Gastrocnemius medialis (tissue), 4 donors: ENCODE measurements at regions of chr1 and their contacts with region 1.

Region 1: DNA sequence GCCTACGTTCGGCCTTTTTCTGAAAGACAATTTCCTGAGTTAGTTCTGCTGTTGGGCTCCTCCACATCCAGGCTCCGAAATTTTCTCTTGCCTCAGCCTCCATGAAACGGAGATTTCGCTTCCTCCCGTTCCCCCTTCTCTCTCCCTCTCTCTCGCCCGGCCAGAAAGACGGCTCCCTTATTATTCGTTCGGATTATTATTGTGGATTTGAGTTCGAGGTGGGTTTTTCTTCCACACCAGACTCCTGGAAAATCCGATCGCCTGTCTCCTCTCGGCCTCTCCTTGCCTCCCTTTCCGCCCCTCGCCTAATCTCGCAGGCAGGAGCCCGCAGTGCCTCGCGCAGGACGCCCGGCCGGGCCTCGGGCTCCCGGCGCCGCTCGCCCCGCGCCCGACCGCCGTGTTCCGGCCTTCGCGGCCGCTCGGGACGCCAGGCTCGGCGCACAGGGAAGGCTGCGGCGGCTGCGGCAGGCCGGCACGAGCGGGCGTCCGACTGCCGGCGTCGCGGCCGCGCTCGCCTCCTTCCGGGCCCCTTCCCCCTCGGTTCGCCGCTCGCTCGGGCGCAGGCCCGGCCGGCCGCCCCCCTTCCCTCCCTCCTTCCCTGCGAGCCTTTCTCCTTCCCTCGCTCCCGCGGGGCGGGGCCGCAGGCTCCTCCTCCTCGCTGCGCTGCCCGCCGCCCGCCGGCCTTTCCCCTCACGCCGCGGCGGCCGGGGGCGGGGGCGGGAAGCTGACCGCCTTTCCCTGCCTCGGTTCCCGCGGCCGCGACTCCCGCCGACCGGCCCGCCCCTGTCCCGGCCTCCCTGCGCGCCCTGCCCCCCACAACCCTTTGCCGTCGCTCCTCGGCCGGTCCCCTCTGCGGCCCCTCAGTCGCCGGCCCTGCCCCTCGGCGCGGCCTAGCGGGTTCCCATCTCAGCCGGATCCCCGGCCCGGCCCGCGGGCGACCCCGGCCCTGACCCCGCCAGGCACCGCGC is at the start of gene ARHGEF11:
- DNase-seq: peak; percentile 85 to 91
- ATAC-seq: peak; percentile 93 to 94
- H3K4me3 ChIP-seq: peak within 1 kb of the TSS; percentile 62 to 68 (median 66)
- H3K27ac ChIP-seq: peak within 1 kb of the TSS; percentile 84 to 89 (median 88)
- H3K4me1 ChIP-seq: peaks cover 38 to 40% of the 10 kb centered on the region in 2 donors
- H3K27me3 ChIP-seq: no peaks in the 10 kb centered on the region
- CTCF ChIP-seq: no peak
- POLR2A ChIP-seq: peak; percentile 80 to 83
- total RNA-seq, gene ARHGEF11: 19.5 to 33.4 (median 27.7) TPM

Region 2: GRCh38 chr1:157124855-157125254 is 79.3 kb after region 1 on chr1:
- in situ Hi-C with region 1: no loop called
- intact Hi-C with region 1: no loop called
- DNase-seq: no peak
- ATAC-seq: no peak
- H3K4me3 ChIP-seq: no peak overlapping the region
- H3K27ac ChIP-seq: no peak overlapping the region
- H3K4me1 ChIP-seq: no peaks in the 10 kb centered on the region
- H3K27me3 ChIP-seq: no peaks in the 10 kb centered on the region
- CTCF ChIP-seq: no peak
- POLR2A ChIP-seq: no peak

Region 3: GRCh38 chr1:157138220-157139051 is 92.9 kb after region 1 on chr1 and contains the start of gene ETV3:
- in situ Hi-C with region 1: no loop called
- intact Hi-C with region 1: loop called (anchors 5 kb)
- DNase-seq: peak; percentile 78 to 84
- ATAC-seq: peak; percentile 95 to 97
- H3K4me3 ChIP-seq: peak within 1 kb of the TSS; percentile 93 to 100 (median 96)
- H3K27ac ChIP-seq: peak within 1 kb of the TSS; percentile 93 to 96 (median 95)
- H3K4me1 ChIP-seq: peaks cover 23 to 25% of the 10 kb centered on the region in 2 donors
- H3K27me3 ChIP-seq: no peaks in the 10 kb centered on the region
- CTCF ChIP-seq: no peak
- POLR2A ChIP-seq: peak; percentile 84
- total RNA-seq, gene ETV3: 8.6 to 13.4 (median 11.4) TPM